ENCODE measurements at regions of chr7 and their contacts with region 1.

Region 1: GRCh38 chr7:74206589-74207120 is 3.2 kb upstream of the LAT2 start:
- DNase-seq: peak; percentile 87
- ATAC-seq: peak; percentile 52
- H3K4me3 ChIP-seq: peak overlapping the region; percentile 23; the same call in 1 of the 2 replicates
- H3K27ac ChIP-seq: no peak overlapping the region
- H3K4me1 ChIP-seq: peaks cover 13% of the 10 kb centered on the region
- H3K27me3 ChIP-seq: no peaks in the 10 kb centered on the region
- CTCF ChIP-seq: peak; percentile 92

Region 2: DNA sequence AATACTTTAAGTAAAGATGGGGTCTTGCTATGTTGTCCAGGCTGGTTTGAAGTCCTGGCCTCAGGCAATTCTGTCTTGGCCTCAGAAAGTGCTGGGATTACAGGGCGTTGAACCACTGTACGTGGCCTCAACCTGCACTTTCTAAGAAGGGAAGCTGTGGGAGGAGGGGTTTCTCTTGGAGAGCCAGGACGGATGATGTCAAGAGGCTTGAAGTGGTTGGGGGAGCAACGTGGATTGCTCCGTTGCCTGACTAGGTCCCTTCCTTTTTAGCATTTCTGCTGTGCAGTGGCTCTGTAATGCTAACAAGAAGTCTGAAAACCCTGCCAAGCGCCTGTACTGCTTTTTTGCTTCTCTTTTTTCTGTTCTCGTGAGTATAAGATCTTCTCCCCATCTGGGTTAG is 516.0 kb before region 1 on chr7:
- CTCF ChIA-PET with region 1: no interaction called
- POLR2A ChIA-PET with region 1: no interaction called
- intact Hi-C with region 1: no loop called
- DNase-seq: no peak
- ATAC-seq: no peak
- H3K4me3 ChIP-seq: no peak overlapping the region
- H3K27ac ChIP-seq: no peak overlapping the region
- H3K4me1 ChIP-seq: no peaks in the 10 kb centered on the region
- H3K27me3 ChIP-seq: no peaks in the 10 kb centered on the region
- CTCF ChIP-seq: no peak

Region 3: GRCh38 chr7:73865738-73866445 is 340.8 kb before region 1 on chr7:
- CTCF ChIA-PET with region 1: no interaction called
- POLR2A ChIA-PET with region 1: no interaction called
- intact Hi-C with region 1: loop called (anchors 5 kb)
- DNase-seq: peak; percentile 67
- ATAC-seq: peak; percentile 74
- H3K4me3 ChIP-seq: no peak overlapping the region
- H3K27ac ChIP-seq: no peak overlapping the region
- H3K4me1 ChIP-seq: no peaks in the 10 kb centered on the region
- H3K27me3 ChIP-seq: no peaks in the 10 kb centered on the region
- CTCF ChIP-seq: peak; percentile 69

Region 4: DNA sequence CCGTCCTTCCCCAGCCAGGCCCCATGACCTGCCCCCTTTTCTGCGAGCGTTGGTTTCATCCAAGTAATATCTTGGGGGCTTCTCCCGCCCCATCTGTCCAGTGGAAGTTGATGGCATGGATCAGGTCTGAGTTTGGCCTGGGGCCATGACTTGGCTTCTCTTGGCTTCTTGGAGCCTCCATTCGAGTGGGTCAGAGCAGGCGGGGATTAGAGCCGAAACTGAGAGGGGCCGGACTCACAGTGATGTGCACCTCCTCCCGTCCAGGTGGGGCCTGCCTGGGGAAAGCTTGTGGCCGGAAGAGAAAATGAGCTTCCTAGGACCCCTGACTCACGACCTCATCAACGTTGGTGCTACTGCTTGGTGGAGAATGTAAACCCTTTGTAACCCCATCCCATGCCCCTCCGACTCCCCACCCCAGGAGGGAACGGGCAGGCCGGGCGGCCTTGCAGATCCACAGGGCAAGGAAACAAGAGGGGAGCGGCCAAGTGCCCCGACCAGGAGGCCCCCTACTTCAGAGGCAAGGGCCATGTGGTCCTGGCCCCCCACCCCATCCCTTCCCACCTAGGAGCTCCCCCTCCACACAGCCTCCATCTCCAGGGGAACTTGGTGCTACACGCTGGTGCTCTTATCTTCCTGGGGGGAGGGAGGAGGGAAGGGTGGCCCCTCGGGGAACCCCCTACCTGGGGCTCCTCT is 138.1 kb before region 1 on chr7:
- CTCF ChIA-PET with region 1: interaction called, 3 read pairs
- POLR2A ChIA-PET with region 1: no interaction called
- intact Hi-C with region 1: loop called (anchors 1 kb)
- DNase-seq: no peak
- ATAC-seq: no peak
- H3K4me3 ChIP-seq: no peak overlapping the region
- H3K27ac ChIP-seq: no peak overlapping the region
- H3K4me1 ChIP-seq: no peaks in the 10 kb centered on the region
- H3K27me3 ChIP-seq: no peaks in the 10 kb centered on the region
- CTCF ChIP-seq: no peak

Region 5: DNA sequence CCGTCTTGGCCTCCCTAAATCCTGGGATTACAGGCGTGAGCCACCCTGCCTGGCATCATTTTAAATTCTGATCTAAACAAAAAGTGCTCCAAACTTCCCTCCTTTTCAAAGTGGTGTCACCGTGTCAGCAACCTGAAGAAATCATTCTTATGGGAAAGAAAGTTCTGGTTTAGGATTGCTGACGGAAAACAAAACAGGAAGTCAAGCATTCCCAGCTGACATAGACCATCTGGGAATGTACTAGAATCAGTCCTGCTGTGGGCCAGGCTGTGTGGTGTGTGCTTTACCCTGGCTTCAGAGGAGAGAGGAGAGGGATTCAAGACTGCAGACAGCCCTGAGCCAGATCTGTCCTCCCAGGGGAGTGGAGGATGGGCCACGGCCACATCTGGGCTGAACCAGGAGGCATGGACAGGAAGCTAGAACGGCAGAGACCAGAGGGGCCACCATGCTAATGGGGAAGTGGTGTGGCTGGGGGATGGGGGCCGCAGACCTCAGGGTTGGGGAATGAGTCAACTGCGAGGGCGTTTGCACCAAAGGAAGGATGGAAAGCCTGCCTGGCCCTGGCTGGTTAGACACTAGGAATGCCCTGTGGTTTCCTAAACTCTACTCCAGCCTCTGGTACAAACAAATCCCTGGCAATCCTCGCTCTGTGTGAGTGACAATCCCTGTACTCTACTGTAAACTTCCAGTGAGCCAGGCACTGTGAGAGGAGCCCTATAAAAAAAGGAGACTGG is 65.8 kb after region 1 on chr7:
- CTCF ChIA-PET with region 1: interaction called, 10 read pairs
- POLR2A ChIA-PET with region 1: no interaction called
- intact Hi-C with region 1: loop called (anchors 5 kb)
- DNase-seq: peak; percentile 77
- ATAC-seq: peak; percentile 73
- H3K4me3 ChIP-seq: no peak overlapping the region
- H3K27ac ChIP-seq: peak overlapping the region; percentile 95
- H3K4me1 ChIP-seq: peaks cover 17% of the 10 kb centered on the region
- H3K27me3 ChIP-seq: no peaks in the 10 kb centered on the region
- CTCF ChIP-seq: no peak

Region 6: GRCh38 chr7:74365322-74366022 is 158.8 kb after region 1 on chr7:
- CTCF ChIA-PET with region 1: interaction called, 10 read pairs
- POLR2A ChIA-PET with region 1: no interaction called
- intact Hi-C with region 1: no loop called
- DNase-seq: peak; percentile 40
- ATAC-seq: peak; percentile 79
- H3K4me3 ChIP-seq: no peak overlapping the region
- H3K27ac ChIP-seq: no peak overlapping the region
- H3K4me1 ChIP-seq: no peaks in the 10 kb centered on the region
- H3K27me3 ChIP-seq: no peaks in the 10 kb centered on the region
- CTCF ChIP-seq: no peak